Head of caudate nucleus (tissue), 42 donors: ENCODE measurements at regions of chr13 and their contacts with region 1.

Region 1: GRCh38 chr13:105202354-105202753 is 1333.1 kb downstream of the EFNB2 start:
- DNase-seq: peak in 21 of 42 donors; percentile 5 to 73 (median 23)

Region 2: GRCh38 chr13:104571161-104571892 is 631.0 kb before region 1 on chr13:
- intact Hi-C with region 1: loop called (anchors 10 kb)
- DNase-seq: peak; percentile 7 to 94 (median 80)

Region 3: GRCh38 chr13:104691767-104692467 is 510.4 kb before region 1 on chr13:
- intact Hi-C with region 1: no loop called
- DNase-seq: no peak